ENCODE measurements at regions of chr16 and their contacts with region 1.

Region 1: DNA sequence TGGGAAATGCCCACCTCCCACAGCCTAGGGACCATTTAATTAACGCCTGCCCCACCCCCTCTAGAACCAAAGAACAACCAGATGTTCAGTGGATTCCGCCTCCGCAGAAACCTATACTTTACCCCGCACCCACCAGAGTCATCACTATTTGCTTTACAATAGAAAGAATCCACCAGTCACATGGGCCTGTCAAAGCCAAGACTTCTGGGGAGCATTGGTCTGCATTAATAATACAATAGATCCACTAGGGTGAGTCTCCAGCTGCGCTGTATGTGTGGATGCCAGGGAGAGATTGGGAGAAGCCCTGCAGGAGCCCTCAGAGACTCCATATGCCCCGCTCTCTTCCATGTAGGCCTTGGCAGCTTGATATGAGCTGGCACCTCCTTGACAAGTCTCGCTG is 31.3 kb downstream of the CLEC19A start:
- DNase-seq: no peak
- ATAC-seq: no peak
- H3K4me3 ChIP-seq: no peak overlapping the region
- H3K27ac ChIP-seq: no peak overlapping the region
- H3K4me1 ChIP-seq: no peaks in the 10 kb centered on the region
- H3K27me3 ChIP-seq: no peaks in the 10 kb centered on the region
- CTCF ChIP-seq: no peak

Region 2: GRCh38 chr16:19252904-19253303 is 63.9 kb before region 1 on chr16:
- intact Hi-C with region 1: loop called in 1 of 2 experiments (anchors 10 kb)
- DNase-seq: no peak
- ATAC-seq: no peak
- H3K4me3 ChIP-seq: no peak overlapping the region
- H3K27ac ChIP-seq: no peak overlapping the region
- H3K4me1 ChIP-seq: no peaks in the 10 kb centered on the region
- H3K27me3 ChIP-seq: no peaks in the 10 kb centered on the region
- CTCF ChIP-seq: no peak

Measured in left lung (tissue), 14 donors.